Dorsolateral prefrontal cortex (tissue), 120 donors: ENCODE measurements at regions of chr10 and their contacts with region 1.

Region 1: DNA sequence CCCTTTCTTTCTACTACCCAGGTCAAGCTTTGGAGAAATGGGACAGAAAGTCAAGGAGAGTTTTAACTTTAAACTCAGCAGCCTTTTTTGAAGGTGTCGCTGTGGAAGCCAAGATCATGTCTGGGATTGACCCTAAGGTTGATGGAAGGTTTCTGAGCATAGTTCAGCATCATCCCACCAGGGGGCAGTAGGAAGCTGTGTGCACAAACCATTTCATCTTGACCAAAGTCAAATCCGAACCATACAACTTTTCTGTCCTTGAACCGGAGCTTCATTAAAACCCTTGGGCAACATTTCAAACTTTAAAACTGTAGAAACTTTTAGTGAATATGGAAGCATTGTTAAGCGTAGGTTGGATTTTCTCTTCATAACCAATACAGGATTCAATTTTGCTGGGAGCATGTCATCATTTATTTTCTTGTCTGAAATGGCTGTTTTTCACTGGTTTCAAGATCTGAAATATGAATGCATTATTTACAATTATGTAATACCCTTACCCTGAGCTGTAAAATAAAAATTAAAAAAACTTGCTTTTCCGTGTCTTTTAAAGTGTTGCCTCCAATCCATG is 214.4 kb upstream of the KIAA1217 start:
- DNase-seq: peak in 5 of 10 donors; percentile 20 to 67 (median 49)
- H3K4me3 ChIP-seq: peak overlapping the region in 1 of 59 donors; percentile 9
- H3K27ac ChIP-seq: no peak overlapping the region
- H3K27me3 ChIP-seq: no peaks in the 10 kb centered on the region
- CTCF ChIP-seq: peak; percentile 45 to 90 (median 81)

Region 2: DNA sequence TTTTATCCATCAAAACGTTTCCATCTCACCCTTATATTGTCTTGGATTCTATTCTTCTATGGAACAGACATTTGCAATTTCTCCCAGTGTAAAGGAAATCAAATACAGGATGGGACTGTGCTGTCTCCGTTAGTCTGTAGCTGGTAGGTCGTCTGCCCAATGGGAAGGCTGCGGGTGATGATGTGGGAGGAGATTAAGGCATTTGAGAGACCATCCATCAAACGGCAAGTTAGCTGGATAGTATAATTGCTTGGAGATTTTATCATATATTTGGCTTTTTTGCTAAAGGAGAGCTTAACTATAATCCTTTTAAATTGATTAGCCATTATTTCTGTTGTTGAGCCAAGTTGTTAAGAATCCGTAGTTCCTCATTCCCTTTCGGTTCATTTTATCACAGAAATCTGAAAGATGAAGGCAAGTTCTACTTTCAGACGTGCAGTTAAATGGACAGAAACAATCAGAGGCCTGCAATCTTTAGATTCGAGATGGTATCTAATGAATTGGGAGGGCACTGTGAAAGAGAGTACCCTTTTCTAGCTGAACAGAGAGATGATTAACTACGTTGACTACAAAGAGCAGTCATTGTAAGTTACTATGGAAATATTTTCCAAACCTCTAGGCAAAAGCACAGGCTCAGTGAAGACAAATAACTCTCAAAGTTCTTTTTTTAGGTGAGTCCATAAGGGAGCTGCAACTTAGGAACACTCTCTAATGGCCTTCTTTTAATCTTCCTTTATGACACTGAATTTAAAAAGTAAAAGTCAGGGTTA is 38.9 kb before region 1 on chr10:
- intact Hi-C with region 1: no loop called
- DNase-seq: no peak
- H3K4me3 ChIP-seq: peak overlapping the region in 1 of 59 donors; percentile 21
- H3K27ac ChIP-seq: no peak overlapping the region
- H3K27me3 ChIP-seq: no peaks in the 10 kb centered on the region
- CTCF ChIP-seq: no peak

Region 3: GRCh38 chr10:24034571-24034970 is 40.0 kb after region 1 on chr10:
- intact Hi-C with region 1: no loop called
- DNase-seq: no peak
- H3K4me3 ChIP-seq: no peak overlapping the region
- H3K27ac ChIP-seq: no peak overlapping the region
- H3K27me3 ChIP-seq: no peaks in the 10 kb centered on the region
- CTCF ChIP-seq: no peak

Region 4: DNA sequence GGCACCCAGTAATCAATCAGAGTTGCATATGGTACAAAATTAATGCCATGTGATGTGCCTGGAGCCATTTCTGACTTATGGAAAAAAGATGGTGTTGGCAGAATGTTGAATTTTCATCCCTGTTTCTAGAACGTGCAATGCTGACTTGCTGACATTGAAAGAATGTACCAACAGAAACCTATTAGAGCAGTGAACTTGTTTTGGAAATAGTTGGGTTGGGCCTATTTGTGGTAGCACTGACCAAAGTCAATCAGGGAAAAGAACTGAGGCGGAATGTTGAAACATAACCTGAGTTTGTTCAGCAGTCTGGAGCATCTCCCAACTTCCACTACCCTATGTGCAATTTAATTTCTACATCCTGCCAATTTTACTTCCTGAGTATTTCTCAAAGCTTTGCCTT is 202.7 kb after region 1 on chr10:
- intact Hi-C with region 1: loop called (anchors 10 kb)
- DNase-seq: no peak
- H3K4me3 ChIP-seq: no peak overlapping the region
- H3K27ac ChIP-seq: no peak overlapping the region
- H3K27me3 ChIP-seq: peaks cover 0 to 4% (median 0%) of the 10 kb centered on the region in 45 donors
- CTCF ChIP-seq: no peak

Region 5: DNA sequence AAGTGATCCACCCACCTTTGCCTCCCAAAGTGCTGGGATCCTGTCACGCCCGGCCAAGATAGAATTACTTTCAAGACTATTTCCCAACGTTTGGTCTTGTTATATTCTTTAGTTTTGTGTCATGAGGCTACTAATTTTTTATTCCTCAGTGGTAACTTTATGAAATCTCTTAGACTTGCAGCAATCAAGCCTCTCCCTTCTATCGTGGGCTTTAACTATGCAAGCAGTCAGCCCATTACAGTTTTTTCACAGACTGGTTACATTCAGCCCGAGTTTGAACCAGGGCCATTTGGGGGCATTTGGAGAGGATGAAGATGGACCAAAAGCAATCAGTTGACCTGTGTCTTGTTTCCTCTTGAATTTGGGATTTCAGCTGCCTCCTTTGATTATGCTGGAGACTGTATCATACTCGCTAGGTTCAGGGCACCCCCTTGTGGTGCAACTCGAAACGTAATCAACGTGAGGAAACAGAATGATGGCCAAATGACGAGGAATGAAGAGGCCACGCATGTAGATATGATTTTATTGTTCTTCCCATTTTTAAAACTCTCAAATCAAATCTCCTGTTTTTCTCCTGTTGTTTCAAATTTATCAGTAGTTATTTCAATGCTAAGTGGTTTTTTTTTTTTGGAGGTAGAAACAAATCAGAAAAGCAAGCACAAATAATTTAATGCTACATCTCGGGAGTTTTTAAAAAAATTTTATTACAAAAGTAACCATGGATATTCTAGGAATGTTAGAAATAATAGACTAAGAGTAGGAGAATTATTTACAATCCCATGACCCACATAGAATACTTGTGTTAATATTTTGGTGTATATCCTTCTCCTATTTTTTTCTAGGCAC is 365.9 kb after region 1 on chr10:
- intact Hi-C with region 1: loop called in 1 of 2 experiments (anchors 10 kb)
- DNase-seq: peak in 9 of 10 donors; percentile 39 to 82 (median 67)
- H3K4me3 ChIP-seq: no peak overlapping the region
- H3K27ac ChIP-seq: no peak overlapping the region
- H3K27me3 ChIP-seq: no peaks in the 10 kb centered on the region
- CTCF ChIP-seq: peak; percentile 45 to 80 (median 68)

Region 6: DNA sequence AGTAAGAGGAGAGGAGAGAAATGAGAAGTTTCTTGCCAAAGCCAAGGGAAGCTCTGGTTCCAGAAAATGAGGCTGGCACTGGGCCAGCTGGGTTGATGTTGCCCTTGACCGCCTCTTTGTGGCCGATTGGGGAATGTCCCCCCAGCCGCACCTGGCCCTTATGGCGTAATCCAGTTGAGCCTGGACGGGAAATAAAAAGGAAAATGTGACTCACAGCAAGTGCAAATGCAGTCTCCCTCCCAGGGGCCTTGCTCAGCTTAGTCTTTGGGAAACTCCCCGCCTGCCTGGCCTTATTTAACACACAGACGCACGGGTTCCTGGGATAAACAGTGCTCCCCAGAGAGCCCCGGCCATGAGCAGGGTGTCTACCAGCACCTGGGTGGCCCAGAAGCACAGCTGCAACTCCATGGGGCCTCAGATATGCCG is 389.1 kb after region 1 on chr10:
- intact Hi-C with region 1: no loop called
- DNase-seq: peak in 9 of 10 donors; percentile 18 to 60 (median 44)
- H3K4me3 ChIP-seq: no peak overlapping the region
- H3K27ac ChIP-seq: peak overlapping the region in 7 of 59 donors; percentile 29 to 80 (median 38)
- H3K27me3 ChIP-seq: peaks cover 0 to 11% (median 0%) of the 10 kb centered on the region in 45 donors
- CTCF ChIP-seq: peak in 37 of 56 donors; percentile 9 to 46 (median 28)